ENCODE measurements at regions of chr2 and their contacts with region 1.

Region 1: DNA sequence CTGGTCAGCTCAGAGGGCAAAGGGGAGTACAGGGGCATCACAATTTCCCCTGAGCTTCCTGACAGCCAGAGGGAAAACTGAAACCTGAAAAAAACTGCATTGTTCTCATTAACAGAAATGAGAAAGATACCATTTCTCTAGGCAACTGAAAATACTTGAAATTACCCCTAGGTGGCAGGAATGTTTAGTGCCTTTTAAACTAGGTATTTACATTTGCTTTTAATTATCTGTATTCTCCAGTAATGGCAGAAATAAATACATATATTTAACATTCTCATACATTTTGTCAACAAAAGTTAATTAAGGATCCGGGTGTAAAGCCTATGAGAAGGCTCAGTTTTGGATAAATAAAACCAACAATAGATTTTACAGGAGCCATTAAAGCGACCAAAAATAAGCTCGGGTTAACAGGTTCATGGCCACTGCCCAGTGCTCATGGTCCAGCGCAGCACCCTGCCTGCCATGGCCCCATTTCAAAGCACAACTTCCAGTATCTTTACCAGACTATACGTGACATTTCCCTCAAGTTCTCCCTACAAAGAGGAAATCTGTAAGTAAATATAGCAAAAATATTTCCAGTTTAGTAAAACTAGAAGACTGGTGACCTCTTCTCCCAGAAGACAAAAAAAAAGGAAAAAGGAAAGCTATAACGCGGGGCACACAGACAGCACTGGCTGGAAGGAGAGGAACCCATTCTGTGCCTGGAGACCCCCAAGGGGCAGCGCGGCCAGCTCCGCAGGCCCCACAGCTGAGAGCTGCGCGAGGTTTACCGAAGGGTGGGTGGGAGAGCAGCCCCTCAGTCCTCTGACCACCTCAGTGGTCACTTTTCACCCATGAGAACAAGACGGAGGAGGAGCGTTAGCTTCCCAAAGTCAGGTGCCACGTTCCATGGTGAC is 34.7 kb downstream of the RPL31 start:
- DNase-seq: peak; percentile 51
- CTCF ChIP-seq: peak; percentile 48

Region 2: DNA sequence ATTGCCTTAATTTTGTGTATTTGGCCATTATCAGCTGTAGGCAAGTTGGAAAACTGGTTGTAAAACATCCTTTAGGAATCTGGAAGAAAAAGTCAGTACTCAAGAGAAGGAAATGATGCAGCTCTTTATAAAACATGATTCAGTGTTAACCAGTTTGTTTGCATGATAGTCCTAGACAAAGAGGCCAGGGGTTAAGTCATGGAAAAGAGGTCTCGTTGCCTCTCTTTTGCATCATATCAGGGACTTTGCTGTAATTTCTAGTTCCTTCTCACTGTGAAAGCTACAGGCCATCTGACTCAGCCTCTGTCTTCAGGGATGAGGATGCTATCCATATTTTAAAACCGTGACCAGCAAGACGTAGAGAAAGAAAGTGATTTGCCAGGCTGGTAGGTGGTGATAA is 178.9 kb before region 1 on chr2:
- CTCF ChIA-PET with region 1: no interaction called
- POLR2A ChIA-PET with region 1: no interaction called
- DNase-seq: no peak
- CTCF ChIP-seq: no peak

Region 3: DNA sequence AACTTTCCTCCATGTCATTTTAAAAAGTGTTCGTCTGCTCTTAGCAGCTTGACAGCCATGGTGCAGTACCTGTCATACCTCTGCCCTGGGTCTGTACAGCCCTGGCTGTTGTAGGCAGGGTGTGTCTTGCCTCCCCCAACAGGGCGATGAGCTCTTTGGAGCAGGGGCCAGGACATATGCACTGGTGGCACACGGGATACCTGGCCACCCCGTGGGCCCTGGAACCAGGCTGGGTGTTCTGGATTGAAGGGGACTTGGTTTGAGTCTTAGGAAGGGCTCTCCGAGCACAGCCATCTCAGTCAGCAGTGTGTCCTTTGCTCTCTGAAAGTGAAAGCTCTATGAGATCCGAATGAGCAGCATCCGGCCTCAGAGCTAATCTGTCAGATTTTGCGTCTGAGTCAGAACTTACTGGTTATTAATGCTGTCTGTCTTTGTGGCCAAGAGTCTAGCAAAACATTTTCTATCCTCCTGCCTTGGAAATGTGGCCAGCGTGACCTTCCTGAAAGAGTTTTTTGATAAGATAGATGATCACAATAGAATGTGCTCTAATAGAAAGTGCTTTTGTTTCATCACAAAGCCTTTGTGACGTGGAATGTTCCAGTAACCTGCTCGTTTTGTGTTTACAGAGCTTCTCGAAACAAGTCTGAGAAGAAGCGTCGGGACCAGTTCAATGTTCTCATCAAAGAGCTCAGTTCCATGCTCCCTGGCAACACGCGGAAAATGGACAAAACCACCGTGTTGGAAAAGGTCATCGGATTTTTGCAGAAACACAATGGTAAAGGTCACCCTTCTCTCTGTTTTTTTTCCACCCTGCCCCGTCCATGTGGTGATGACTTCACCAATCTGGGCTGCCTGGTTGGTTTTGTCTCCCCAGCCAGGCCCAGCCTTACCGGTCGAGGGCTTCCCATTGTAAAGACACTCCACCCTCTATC is 112.0 kb before region 1 on chr2:
- CTCF ChIA-PET with region 1: no interaction called
- POLR2A ChIA-PET with region 1: no interaction called
- DNase-seq: peak; percentile 58
- CTCF ChIP-seq: no peak

Region 4: DNA sequence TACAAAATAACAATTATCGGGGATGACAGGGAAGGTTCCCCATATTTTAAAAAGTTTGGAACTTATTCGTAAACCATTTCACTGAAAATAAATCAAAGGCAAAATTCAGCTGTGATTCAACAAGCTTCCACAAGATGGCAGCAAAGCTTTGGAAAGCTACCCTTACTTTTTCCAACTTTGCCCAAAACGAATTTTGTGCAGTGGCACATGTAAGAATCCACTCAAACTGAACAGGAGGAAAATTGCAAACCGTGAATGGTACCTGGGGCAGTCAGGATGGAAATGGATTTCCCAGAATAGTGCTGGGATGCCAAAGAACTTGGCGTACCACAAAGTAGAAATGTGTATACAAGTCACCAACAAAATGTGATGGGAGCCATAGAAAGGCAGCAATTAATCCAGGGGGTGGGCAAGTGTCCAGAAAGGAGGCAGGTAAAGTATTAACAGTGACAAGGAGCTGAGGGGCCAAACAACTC is 24.1 kb before region 1 on chr2:
- CTCF ChIA-PET with region 1: interaction called, 13 read pairs
- POLR2A ChIA-PET with region 1: no interaction called
- DNase-seq: no peak
- CTCF ChIP-seq: peak; percentile 63

Region 5: DNA sequence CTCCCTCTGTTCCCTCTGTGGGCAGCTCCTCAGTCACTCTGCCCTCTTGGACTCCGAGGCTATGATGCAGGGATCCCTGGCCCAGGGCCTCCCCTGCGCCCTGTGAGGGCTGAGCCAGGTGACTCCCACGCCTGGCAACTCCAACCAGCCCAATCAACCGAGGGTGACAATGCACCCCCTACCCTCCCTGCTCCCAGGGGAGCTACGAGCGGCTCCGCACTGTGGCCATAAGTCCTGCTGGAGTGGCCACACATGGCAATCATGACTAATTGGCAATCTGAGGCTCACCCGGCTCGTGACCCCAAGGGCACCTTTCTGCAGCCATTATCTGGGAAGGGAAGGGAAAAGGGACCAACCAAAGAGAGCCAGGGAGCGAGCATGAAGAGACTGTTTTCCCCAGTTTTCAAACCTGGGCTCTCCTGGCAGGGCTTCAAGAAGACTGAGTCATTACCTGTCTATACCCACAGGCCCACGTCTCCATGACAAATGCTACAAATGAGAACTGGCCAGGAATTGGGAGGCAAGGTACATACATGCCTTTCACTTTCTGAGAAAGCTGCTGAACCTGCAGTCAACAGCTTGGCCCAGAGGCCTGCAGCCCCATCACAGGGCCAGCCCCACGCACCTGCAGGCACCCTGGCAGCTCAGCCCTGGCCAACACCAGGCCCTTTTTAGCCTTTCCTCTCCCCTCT is 10.4 kb after region 1 on chr2:
- CTCF ChIA-PET with region 1: interaction called, 14 read pairs
- POLR2A ChIA-PET with region 1: no interaction called
- DNase-seq: no peak
- CTCF ChIP-seq: no peak

Region 6: GRCh38 chr2:101160454-101160853 is 123.6 kb after region 1 on chr2:
- CTCF ChIA-PET with region 1: interaction called, 13 read pairs
- POLR2A ChIA-PET with region 1: no interaction called
- DNase-seq: no peak
- CTCF ChIP-seq: no peak

Region 7: DNA sequence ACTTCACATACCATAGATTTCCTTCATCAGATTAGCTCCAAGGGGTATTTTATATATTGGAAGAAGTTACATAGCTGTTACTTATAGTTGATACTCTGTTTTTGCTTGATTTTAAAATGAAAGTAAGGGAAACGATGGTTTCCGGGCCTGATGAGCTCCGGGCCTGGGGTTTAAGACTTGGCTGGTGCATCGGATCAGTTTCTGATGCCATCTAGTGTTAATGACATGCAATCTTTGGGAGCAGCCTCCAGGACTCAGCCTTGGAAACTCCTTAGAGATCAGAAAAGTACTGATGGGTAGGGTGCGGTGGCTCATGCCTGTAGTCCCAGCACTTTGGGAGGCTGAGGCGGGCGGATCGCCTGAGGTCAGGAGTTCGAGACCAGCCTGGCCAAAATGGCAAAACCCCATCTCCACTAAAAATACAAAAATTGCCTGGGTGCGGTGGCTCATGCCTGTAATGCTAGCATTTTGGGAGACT is 168.8 kb after region 1 on chr2:
- CTCF ChIA-PET with region 1: interaction called, 15 read pairs
- POLR2A ChIA-PET with region 1: no interaction called
- DNase-seq: peak; percentile 57
- CTCF ChIP-seq: peak; percentile 51